ENCODE measurements at regions of chr3 and their contacts with region 1.

Region 1: DNA sequence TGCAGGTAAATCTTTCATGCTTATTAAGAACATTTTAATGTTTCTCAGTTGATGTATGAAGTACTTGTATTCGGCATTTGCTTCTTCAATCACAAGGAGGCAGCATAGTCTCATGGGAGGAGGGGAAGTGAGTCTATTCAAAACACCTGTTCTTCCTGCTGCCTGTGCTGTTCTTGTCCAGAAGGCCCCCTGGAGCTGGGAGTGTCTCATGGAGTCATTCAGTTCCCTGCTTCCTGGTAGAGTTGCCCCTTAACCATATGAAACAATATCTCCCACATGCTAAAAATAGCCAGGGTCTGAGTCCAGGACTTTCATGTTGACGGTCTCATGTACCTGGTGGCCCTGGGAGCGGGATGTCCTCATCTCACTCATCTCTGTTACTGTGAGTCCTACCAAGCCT is 15.5 kb upstream of the PPP1R2 start:
- DNase-seq: peak; percentile 65
- ATAC-seq: peak; percentile 60
- H3K4me3 ChIP-seq: no peak overlapping the region
- H3K27ac ChIP-seq: no peak overlapping the region
- H3K4me1 ChIP-seq: peaks cover 15% of the 10 kb centered on the region
- H3K27me3 ChIP-seq: no peaks in the 10 kb centered on the region
- CTCF ChIP-seq: peak; percentile 78

Region 2: GRCh38 chr3:195542698-195543499 is 15.7 kb before region 1 on chr3 and contains the start of gene PPP1R2:
- CTCF ChIA-PET with region 1: interaction called, 4 read pairs
- POLR2A ChIA-PET with region 1: no interaction called
- intact Hi-C with region 1: loop called (anchors 1 kb)
- DNase-seq: peak; percentile 94
- ATAC-seq: peak; percentile 82
- H3K4me3 ChIP-seq: peak within 1 kb of the TSS; percentile 79
- H3K27ac ChIP-seq: no peak within 1 kb of the TSS
- H3K4me1 ChIP-seq: peaks cover 38% of the 10 kb centered on the region
- H3K27me3 ChIP-seq: no peaks in the 10 kb centered on the region
- CTCF ChIP-seq: no peak
- total RNA-seq, gene PPP1R2: 132 and 150 TPM in 2 replicates

Region 3: DNA sequence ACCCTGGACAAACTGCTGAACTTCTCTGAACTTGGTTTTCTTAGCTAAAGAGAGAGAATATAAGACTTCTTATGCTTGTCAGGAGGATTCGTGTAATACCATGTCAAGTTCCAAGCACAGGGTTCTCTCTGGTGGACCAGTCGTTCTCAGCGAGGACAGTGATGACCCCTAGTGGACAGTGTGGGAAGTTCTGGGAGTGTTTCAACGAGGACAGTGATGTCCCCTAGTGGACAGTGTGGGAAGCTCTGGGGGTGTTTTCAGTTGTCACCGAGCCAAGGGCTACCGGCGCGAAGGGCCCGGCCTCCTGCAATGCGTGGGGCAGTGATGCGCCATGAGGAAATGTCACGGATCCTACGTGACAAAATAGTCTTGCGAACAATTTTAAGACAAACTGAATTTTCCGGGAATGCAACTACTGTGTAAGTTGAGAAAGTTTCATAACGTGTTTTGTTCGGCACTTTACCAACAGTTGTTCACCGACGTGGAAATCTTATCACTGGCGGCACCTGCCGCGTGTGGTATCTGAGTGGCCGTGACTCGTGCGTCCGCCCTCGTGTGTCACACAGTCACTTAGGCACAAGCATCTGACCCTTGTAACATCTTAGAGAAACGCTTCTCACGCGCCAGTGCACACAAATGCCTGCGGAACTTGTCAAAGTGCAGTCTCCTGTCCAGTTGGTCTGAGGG is 292.4 kb after region 1 on chr3:
- CTCF ChIA-PET with region 1: no interaction called
- POLR2A ChIA-PET with region 1: no interaction called
- intact Hi-C with region 1: loop called (anchors 2 kb)
- DNase-seq: peak; percentile 96
- ATAC-seq: peak; percentile 73
- H3K4me3 ChIP-seq: no peak overlapping the region
- H3K27ac ChIP-seq: no peak overlapping the region
- H3K4me1 ChIP-seq: peaks cover 7% of the 10 kb centered on the region
- H3K27me3 ChIP-seq: no peaks in the 10 kb centered on the region
- CTCF ChIP-seq: peak; percentile 100

Region 4: DNA sequence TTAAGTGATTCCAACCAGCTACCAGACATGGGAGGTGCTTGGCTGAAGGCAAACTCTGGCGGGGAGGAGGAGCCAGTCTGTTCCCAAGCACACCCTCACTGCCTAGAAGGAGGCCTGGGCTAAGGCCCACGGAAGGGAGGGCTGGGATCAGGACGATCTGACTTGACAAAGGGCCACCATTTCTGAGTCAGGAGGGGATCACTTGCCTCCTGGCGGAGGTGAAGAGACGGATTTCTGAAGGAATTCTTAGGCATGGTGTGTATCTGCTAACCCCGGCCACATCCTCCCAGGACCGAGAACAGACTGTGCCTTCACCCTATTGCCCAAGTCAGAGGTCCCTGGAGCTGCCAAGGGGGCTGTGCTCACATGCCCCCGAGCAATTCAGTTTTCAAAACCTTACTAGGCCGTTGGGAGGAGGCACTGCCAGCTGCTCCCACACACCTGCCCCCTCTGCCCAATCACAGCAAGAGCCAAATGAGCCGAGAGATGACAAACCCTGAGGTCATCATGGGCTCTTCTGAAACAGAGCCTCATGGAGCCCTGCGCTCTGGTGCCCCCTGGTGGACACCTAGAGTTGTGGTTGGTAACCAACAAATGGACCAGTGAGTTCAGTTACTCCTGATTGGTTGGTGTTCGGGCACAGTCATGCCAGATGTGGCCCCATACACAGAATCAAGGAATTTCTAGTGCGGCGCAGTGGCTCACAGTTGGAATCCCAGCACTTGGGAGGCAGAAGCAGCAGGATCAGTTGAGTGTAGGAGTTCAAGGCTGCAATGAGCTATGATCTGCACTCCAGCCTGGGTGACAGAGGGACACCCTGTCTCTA is 356.3 kb after region 1 on chr3:
- CTCF ChIA-PET with region 1: no interaction called
- POLR2A ChIA-PET with region 1: no interaction called
- intact Hi-C with region 1: loop called (anchors 2 kb)
- DNase-seq: peak; percentile 99
- ATAC-seq: peak; percentile 92
- H3K4me3 ChIP-seq: peak overlapping the region; percentile 54
- H3K27ac ChIP-seq: peak overlapping the region; percentile 88
- H3K4me1 ChIP-seq: peaks cover 36% of the 10 kb centered on the region
- H3K27me3 ChIP-seq: no peaks in the 10 kb centered on the region
- CTCF ChIP-seq: peak; percentile 97

Region 5: DNA sequence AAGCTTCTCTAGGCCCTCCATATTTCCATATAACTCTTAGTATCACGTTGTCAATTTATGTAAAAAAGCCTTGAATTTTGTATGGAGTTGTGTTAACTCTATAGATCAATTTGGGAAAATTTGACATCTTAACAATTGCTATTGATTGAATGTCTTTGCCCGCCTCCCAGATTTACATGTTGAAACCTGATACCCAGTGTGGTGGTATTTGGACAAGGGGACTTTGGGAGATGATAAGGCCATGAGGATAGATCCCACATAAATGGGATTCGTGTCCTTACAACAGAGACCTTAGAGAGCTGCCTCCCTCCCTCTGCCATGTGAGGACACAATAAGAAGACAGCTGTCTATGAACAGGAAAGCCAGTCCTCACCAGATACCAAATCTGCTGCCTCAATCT is 370.9 kb after region 1 on chr3:
- CTCF ChIA-PET with region 1: no interaction called
- POLR2A ChIA-PET with region 1: no interaction called
- intact Hi-C with region 1: no loop called
- DNase-seq: no peak
- ATAC-seq: no peak
- H3K4me3 ChIP-seq: no peak overlapping the region
- H3K27ac ChIP-seq: no peak overlapping the region
- H3K4me1 ChIP-seq: no peaks in the 10 kb centered on the region
- H3K27me3 ChIP-seq: no peaks in the 10 kb centered on the region
- CTCF ChIP-seq: no peak

Measured in PC-3 (cell line).